Mucosa of descending colon (tissue), 3 donors: ENCODE measurements at regions of chr2 and their contacts with region 1.

Region 1: DNA sequence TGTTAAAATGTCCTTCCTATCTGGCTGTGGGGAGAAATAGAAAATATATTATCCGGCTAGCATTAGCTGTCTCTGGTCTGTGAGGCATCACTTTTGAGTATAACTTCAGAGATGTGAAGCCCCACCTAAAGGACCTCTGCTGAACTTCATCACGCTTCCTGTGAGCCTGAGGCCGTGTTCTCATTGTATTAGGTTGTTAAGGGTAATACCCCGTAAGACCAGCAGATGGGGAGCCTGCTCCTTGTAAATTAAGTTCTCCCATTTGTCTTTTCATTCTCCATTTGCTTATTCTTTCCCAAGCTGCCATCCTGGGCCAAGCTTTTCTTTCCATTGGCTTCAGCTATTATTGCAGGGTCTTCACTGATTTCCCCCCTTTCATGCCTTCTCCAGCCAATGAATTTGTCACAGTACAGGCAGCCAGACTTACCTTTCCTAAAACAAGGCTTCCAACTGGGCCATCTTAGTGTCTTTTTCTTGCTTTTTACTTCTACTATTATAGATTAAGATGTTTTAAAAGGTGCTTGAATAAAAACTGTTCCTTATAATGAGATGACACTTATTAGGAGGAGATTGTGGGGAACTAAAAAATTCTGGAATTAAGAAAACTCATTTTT is 12.4 kb downstream of the NIF3L1 start:
- DNase-seq: peak in 1 of 3 donors; percentile 88
- ATAC-seq: peak; percentile 95
- H3K4me3 ChIP-seq: no peak overlapping the region
- H3K4me1 ChIP-seq: no peaks in the 10 kb centered on the region
- CTCF ChIP-seq: peak; percentile 48

Region 2: DNA sequence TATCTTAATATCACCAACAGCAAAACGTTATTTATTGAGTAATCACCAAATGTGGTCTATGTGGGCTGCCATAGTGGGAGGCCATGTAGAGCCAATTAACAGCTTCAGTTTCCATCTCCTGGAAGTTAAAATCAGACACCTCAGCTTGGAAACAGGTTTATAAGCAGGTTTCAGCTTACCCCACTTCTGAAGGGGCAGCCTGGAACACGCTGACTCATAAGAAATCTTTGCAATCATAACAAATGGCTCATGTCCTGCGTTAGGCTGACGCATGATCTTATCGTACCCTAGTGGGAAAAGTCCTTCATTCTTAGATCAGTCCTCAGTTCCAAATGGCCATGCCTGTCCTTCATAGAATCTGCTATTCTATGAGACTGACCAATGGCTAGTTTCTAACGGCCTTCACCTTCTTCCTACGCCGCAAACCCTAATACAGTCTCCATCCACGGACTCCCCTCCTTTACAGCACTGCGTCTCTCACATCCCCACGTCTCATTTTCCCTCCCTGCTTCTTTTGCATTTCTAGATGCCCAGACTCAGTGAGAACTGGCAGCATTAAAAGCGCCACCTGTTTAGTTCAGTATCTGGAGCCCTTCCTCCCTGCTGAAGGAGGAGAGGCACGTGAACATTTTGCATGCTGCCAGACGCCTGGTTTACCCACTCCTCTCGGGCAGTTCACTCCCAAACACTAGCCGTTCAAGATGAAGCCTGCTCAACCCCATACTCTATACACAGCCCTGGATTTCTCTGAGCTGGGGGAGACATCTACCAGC is 114.0 kb before region 1 on chr2:
- intact Hi-C with region 1: no loop called
- DNase-seq: no peak
- ATAC-seq: no peak
- H3K4me3 ChIP-seq: no peak overlapping the region
- H3K4me1 ChIP-seq: no peaks in the 10 kb centered on the region
- CTCF ChIP-seq: no peak

Region 3: DNA sequence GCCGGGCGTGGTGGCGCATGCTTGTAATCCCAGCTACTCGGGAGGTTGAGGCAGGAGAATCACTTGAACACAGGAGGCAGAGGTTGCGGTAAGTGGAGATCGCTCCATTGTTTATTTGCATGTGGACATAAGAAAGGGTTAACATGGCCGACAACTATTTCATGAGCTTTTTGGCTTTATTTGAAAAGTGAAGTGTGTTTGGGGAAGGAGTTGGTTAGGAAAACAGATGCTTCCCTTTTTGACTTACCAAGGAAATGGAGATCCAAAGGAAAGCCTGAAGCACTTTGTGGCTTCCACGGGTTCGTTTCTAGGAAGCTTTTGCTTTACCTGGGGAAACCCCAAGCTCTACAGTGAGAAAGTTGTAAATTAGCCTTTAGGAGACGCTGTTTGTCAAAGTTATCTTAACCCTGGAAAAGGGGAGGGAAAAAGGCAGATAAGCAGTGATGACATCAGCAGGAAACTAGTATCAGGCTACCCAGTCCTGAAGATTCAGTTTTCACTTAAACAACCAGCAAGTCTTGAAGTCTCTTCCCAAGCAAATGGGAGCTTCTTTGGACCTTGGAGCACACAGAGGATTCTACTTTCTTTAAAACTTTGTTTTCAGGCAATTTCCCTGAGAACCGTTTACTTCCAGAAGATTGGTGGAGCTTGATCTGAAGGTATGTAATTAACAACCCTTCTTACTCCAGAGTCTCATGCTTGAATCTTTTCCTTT is 281.2 kb after region 1 on chr2 and contains the start of gene CASP10:
- intact Hi-C with region 1: loop called in 1 of 2 experiments (anchors 10 kb)
- DNase-seq: peak in 1 of 3 donors; percentile 63
- ATAC-seq: peak; percentile 94
- H3K4me3 ChIP-seq: peak within 1 kb of the TSS; percentile 27
- H3K4me1 ChIP-seq: peaks cover 3% of the 10 kb centered on the region
- CTCF ChIP-seq: no peak
- total RNA-seq, gene CASP10: 38.6 to 66.1 (median 58.5) TPM

Region 4: DNA sequence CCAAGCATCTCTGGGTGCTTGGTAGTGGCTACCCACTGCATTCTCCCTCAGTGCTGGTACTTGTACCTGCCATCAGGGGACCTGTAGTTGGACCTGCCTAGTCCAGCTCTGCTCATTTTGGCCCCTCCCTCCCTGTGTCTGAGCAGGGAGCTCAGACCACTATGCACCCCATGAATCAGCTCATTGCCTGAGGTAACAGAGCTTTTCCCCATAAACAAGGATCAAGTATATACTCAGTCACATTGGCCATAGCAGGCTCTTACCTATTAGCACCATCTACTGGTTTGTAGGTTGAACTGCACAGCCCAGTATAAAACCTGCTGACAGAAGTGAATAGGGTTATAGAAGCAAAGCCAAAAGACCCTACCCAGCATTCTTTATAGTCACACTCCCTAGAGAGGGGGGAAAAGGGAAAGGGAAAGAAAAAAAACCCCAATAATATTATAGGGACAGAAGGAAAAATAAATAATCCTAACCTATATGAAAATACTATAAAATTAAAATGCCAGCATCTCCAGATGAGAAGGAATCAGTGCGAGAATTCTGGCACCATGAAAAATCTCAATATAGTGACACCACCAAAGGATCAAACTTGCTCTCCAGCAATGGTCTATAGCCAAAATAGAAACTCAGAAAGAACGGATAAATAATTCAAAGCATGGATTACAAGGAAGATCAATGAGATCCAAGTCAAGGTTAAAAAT is 462.4 kb after region 1 on chr2:
- intact Hi-C with region 1: no loop called
- DNase-seq: peak in 1 of 3 donors; percentile 40
- ATAC-seq: peak; percentile 87
- H3K4me3 ChIP-seq: no peak overlapping the region
- H3K4me1 ChIP-seq: no peaks in the 10 kb centered on the region
- CTCF ChIP-seq: peak; percentile 81

Region 5: DNA sequence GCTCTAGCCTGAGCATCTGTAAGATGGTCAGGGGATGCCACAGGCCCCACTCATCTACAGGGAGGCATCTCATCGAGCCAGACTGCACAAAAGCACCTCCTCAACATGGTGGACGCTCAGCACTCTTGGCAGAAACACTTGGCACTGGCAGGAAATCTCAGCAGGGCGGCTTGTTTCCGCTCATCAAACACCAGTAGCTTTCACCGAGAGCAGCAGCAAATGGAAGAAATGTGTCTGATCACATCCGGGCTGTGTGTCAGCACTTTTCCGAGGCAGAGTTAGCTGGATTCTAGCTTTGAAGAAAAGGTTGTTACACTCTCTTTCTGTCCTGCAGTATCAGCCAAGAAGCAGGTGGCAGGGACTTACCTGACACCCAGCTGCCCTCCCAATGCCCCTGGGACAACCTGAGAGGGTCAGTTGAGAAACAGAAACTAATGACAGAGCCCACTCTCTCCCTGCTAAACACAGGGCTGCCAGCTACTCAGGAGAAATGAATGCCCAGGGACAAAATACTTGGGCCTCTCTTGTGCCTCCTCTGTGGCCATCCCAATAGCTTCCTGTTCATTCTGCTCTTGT is 1063.2 kb after region 1 on chr2:
- intact Hi-C with region 1: no loop called
- DNase-seq: no peak
- ATAC-seq: no peak
- H3K4me3 ChIP-seq: no peak overlapping the region
- H3K4me1 ChIP-seq: no peaks in the 10 kb centered on the region
- CTCF ChIP-seq: no peak